ENCODE measurements at regions of chr1 and their contacts with region 1.

Region 1: DNA sequence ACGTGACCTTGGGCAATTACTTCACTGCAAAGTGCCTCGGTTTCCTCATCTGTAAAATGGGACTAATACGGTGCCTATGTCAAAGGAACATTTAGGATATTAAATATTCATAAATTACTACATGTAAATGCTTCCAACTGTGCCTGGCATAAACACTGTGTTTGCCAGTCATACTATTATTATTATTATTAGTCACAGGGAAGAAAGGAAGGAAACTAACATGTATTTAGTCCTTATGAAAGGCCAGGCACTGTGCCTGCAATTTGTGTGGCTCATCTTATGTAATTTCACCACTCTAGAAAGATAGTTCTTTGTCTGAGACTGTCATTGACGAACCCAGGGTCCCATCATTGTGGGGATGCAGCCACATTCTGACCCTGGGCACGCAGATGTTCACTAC is 45.0 kb downstream of the EPHB2 start:
- DNase-seq: no peak
- H3K4me3 ChIP-seq: no peak overlapping the region
- H3K27ac ChIP-seq: no peak overlapping the region
- H3K4me1 ChIP-seq: peaks cover 16% of the 10 kb centered on the region
- H3K27me3 ChIP-seq: no peaks in the 10 kb centered on the region
- CTCF ChIP-seq: no peak

Region 2: DNA sequence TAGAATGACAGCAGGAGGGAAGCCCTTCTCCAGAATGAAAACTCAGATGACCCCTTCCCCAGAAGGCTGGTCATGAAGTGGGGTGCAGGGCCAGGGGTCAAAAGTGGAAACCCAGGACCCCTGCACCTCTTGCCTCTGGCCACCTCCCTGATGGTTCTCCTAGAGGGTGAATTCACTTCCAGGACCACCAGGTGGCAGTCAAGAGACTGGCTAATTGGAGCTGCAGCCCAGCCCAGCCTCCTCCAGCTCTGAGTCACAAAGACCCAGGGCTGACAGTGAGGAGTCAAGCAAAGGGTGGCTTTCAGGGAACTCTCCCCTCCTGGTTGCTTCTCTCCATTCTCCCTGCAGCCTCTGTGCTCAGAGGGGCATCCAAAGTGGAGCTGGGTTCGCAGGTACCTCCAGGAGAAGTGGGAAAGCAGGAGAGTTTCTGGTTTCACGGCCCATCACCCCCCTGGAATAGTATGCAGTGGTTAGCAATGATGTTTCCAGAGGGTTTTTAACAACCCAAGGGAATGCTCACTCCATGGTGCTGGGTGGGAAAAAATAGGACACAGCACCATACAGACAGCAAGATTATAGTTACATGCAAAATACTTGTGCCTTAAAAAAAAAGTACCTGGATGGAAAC is 51.1 kb before region 1 on chr1:
- dilution Hi-C with region 1: loop called (anchors 5 kb)
- DNase-seq: peak; percentile 26
- H3K4me3 ChIP-seq: no peak overlapping the region
- H3K27ac ChIP-seq: no peak overlapping the region
- H3K4me1 ChIP-seq: no peaks in the 10 kb centered on the region
- H3K27me3 ChIP-seq: peaks cover 9% of the 10 kb centered on the region
- CTCF ChIP-seq: peak; percentile 78 to 94 (median 91)

Region 3: GRCh38 chr1:22801761-22802160 is 46.1 kb after region 1 on chr1:
- dilution Hi-C with region 1: no loop called
- DNase-seq: no peak
- H3K4me3 ChIP-seq: no peak overlapping the region
- H3K27ac ChIP-seq: no peak overlapping the region
- H3K4me1 ChIP-seq: peaks cover 8% of the 10 kb centered on the region
- H3K27me3 ChIP-seq: peaks cover 10% of the 10 kb centered on the region
- CTCF ChIP-seq: no peak

Region 4: DNA sequence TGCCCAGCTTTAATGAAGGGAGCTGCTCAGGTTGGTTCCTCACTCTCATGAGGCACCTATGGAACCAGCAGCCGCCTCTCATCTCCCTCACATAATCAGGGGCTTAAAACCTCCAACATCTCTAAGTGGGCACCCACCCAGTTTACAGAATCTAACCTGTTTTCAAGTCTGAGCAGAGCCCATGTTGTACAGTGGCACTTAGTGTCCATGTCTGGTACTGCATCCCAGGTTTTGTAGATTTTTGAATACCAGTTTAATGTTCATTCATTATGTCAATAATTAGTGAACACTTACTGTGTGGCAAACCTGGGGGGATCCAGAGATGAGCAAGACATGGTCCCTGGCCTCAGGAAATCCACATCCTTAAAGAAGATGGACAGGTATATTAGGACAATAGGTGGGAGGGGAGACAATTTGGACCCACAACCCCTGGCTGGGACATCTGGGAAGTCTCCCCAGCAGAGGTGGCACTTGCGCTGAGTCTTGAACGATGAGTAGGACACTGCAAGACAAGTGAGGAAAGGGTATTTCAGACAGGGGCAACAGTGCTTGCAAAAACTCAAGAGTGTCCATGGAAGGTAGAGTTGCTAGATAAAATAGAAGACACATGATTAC is 133.7 kb after region 1 on chr1:
- dilution Hi-C with region 1: no loop called
- DNase-seq: no peak
- H3K4me3 ChIP-seq: no peak overlapping the region
- H3K27ac ChIP-seq: no peak overlapping the region
- H3K4me1 ChIP-seq: no peaks in the 10 kb centered on the region
- H3K27me3 ChIP-seq: peaks cover 8% of the 10 kb centered on the region
- CTCF ChIP-seq: peak; percentile 76 to 93 (median 78)

Measured in keratinocyte (primary cell).